Endothelial cell of umbilical vein (primary cell): ENCODE measurements at regions of chr1 and their contacts with region 1.

Region 1: DNA sequence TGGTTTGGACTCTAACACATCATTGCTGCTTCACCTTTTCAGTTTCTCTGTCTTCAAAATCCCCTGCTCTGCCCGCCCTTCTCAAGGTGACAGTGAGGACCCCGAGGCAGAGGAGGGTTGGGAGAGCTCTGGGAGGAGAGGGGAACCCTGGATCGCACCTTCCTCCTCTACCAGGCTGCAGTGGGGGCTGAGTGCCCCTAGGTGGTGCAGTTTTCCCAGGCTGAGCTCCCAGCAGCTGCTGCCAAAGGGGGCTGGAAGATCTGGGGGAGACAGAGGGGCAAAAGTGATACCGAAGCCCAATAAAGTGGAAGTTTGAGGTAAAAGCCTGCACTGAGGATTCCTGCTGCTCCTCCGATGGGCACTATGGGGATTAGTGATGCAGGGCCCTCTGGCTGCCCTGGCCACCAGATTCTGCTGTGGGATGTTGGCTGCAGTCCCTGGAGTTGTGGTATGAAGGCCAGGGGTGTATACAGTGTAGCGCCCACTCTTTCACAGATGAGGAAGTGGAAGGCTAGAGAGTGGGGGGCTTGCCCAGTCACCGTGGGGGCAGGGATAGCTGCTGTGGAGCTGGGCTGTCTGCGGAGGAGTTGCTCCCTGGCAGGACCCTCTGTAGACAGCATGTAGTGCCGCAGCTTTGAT is 40.7 kb upstream of the SCMH1 start:
- DNase-seq: peak; percentile 30
- H3K4me3 ChIP-seq: no peak overlapping the region
- H3K27ac ChIP-seq: no peak overlapping the region
- H3K4me1 ChIP-seq: peaks cover 11% of the 10 kb centered on the region
- H3K27me3 ChIP-seq: peaks cover 0 to 4% of the 10 kb centered on the region in 2 experiments
- CTCF ChIP-seq: peak; percentile 80 to 91
- POLR2A ChIP-seq: no peak

Region 2: GRCh38 chr1:39776400-39776713 is 1506.4 kb before region 1 on chr1:
- CTCF ChIA-PET with region 1: no interaction called
- POLR2A ChIA-PET with region 1: no interaction called
- dilution Hi-C with region 1: no loop called
- intact Hi-C with region 1: no loop called
- DNase-seq: no peak
- H3K4me3 ChIP-seq: no peak overlapping the region
- H3K27ac ChIP-seq: no peak overlapping the region
- H3K4me1 ChIP-seq: no peaks in the 10 kb centered on the region
- H3K27me3 ChIP-seq: peaks cover 0 to 3% of the 10 kb centered on the region in 2 experiments
- CTCF ChIP-seq: no peak
- POLR2A ChIP-seq: no peak

Region 3: GRCh38 chr1:40895601-40896000 is 387.2 kb before region 1 on chr1:
- CTCF ChIA-PET with region 1: no interaction called
- POLR2A ChIA-PET with region 1: no interaction called
- dilution Hi-C with region 1: no loop called
- intact Hi-C with region 1: no loop called
- DNase-seq: no peak
- H3K4me3 ChIP-seq: no peak overlapping the region
- H3K27ac ChIP-seq: no peak overlapping the region
- H3K4me1 ChIP-seq: peaks cover 14% of the 10 kb centered on the region
- H3K27me3 ChIP-seq: no peaks in the 10 kb centered on the region
- CTCF ChIP-seq: no peak
- POLR2A ChIP-seq: no peak

Region 4: GRCh38 chr1:41135196-41135947 is 147.4 kb before region 1 on chr1:
- CTCF ChIA-PET with region 1: no interaction called
- POLR2A ChIA-PET with region 1: no interaction called
- dilution Hi-C with region 1: no loop called
- intact Hi-C with region 1: no loop called
- DNase-seq: no peak
- H3K4me3 ChIP-seq: no peak overlapping the region
- H3K27ac ChIP-seq: no peak overlapping the region
- H3K4me1 ChIP-seq: no peaks in the 10 kb centered on the region
- H3K27me3 ChIP-seq: no peaks in the 10 kb centered on the region
- CTCF ChIP-seq: no peak
- POLR2A ChIP-seq: no peak

Region 5: GRCh38 chr1:41192456-41193178 is 90.2 kb before region 1 on chr1:
- CTCF ChIA-PET with region 1: no interaction called
- POLR2A ChIA-PET with region 1: no interaction called
- dilution Hi-C with region 1: no loop called
- intact Hi-C with region 1: no loop called
- DNase-seq: no peak
- H3K4me3 ChIP-seq: no peak overlapping the region
- H3K27ac ChIP-seq: no peak overlapping the region
- H3K4me1 ChIP-seq: no peaks in the 10 kb centered on the region
- H3K27me3 ChIP-seq: no peaks in the 10 kb centered on the region
- CTCF ChIP-seq: no peak
- POLR2A ChIP-seq: no peak

Region 6: GRCh38 chr1:41268154-41268770 is 14.5 kb before region 1 on chr1:
- CTCF ChIA-PET with region 1: interaction called, 23 read pairs
- POLR2A ChIA-PET with region 1: interaction called, 3 read pairs
- dilution Hi-C with region 1: no loop called
- intact Hi-C with region 1: no loop called
- DNase-seq: peak; percentile 68
- H3K4me3 ChIP-seq: no peak overlapping the region
- H3K27ac ChIP-seq: no peak overlapping the region
- H3K4me1 ChIP-seq: no peaks in the 10 kb centered on the region
- H3K27me3 ChIP-seq: peaks cover 0 to 9% of the 10 kb centered on the region in 2 experiments
- CTCF ChIP-seq: peak; percentile 95 to 97
- POLR2A ChIP-seq: no peak

Region 7: GRCh38 chr1:41313661-41314131 is 30.9 kb after region 1 on chr1:
- CTCF ChIA-PET with region 1: interaction called, 16 read pairs
- POLR2A ChIA-PET with region 1: no interaction called
- dilution Hi-C with region 1: no loop called
- intact Hi-C with region 1: no loop called
- DNase-seq: peak; percentile 30
- H3K4me3 ChIP-seq: no peak overlapping the region
- H3K27ac ChIP-seq: no peak overlapping the region
- H3K4me1 ChIP-seq: no peaks in the 10 kb centered on the region
- H3K27me3 ChIP-seq: peaks cover 0 to 14% of the 10 kb centered on the region in 2 experiments
- CTCF ChIP-seq: peak; percentile 61 to 72
- POLR2A ChIP-seq: no peak

Region 8: GRCh38 chr1:41360993-41361753 is 78.4 kb after region 1 on chr1 and contains the start of gene FOXO6:
- CTCF ChIA-PET with region 1: interaction called, 16 read pairs
- POLR2A ChIA-PET with region 1: no interaction called
- dilution Hi-C with region 1: no loop called
- intact Hi-C with region 1: no loop called
- DNase-seq: peak; percentile 96
- H3K4me3 ChIP-seq: peak within 1 kb of the TSS in 2 of 3 experiments; percentile 32 to 36
- H3K27ac ChIP-seq: no peak within 1 kb of the TSS
- H3K4me1 ChIP-seq: peaks cover 3% of the 10 kb centered on the region
- H3K27me3 ChIP-seq: peaks cover 14 to 22% of the 10 kb centered on the region in 2 experiments
- CTCF ChIP-seq: peak; percentile 47 to 59
- POLR2A ChIP-seq: no peak
- total RNA-seq, gene FOXO6: 0.18 and 0.38 TPM in 2 replicates

Region 9: GRCh38 chr1:41423511-41424221 is 140.9 kb after region 1 on chr1:
- CTCF ChIA-PET with region 1: interaction called, 114 read pairs
- POLR2A ChIA-PET with region 1: no interaction called
- dilution Hi-C with region 1: no loop called
- intact Hi-C with region 1: no loop called
- DNase-seq: no peak
- H3K4me3 ChIP-seq: no peak overlapping the region
- H3K27ac ChIP-seq: no peak overlapping the region
- H3K4me1 ChIP-seq: peaks cover 14% of the 10 kb centered on the region
- H3K27me3 ChIP-seq: no peaks in the 10 kb centered on the region
- CTCF ChIP-seq: peak in 1 of 2 donors; percentile 49
- POLR2A ChIP-seq: no peak

Region 10: GRCh38 chr1:41516168-41517061 is 233.6 kb after region 1 on chr1:
- CTCF ChIA-PET with region 1: interaction called, 15 read pairs
- POLR2A ChIA-PET with region 1: no interaction called
- dilution Hi-C with region 1: no loop called
- intact Hi-C with region 1: no loop called
- DNase-seq: peak; percentile 91
- H3K4me3 ChIP-seq: peak overlapping the region in 2 of 3 experiments; percentile 13 to 14
- H3K27ac ChIP-seq: no peak overlapping the region
- H3K4me1 ChIP-seq: peaks cover 4% of the 10 kb centered on the region
- H3K27me3 ChIP-seq: no peaks in the 10 kb centered on the region
- CTCF ChIP-seq: peak; percentile 94 to 99
- POLR2A ChIP-seq: no peak